CD4-positive, alpha-beta T cell (primary cell): ENCODE measurements at regions of chr14 and their contacts with region 1.

Region 1: GRCh38 chr14:95993768-95994592 is 45.2 kb upstream of the C14orf132 start:
- DNase-seq: peak in 6 of 14 experiments; percentile 4 to 60 (median 36)
- ATAC-seq: no peak
- H3K4me3 ChIP-seq: no peak overlapping the region
- H3K4me3 Mint-ChIP-seq: no peak overlapping the region
- H3K27ac ChIP-seq: no peak overlapping the region
- H3K27ac Mint-ChIP-seq: no peak overlapping the region
- H3K4me1 ChIP-seq: no peaks in the 10 kb centered on the region
- H3K4me1 Mint-ChIP-seq: no peaks in the 10 kb centered on the region
- H3K27me3 ChIP-seq: peaks cover 6 to 23% of the 10 kb centered on the region in 2 experiments
- H3K27me3 Mint-ChIP-seq: peaks cover 66% of the 10 kb centered on the region
- CTCF ChIP-seq: peak; percentile 89

Region 2: GRCh38 chr14:95425369-95426115 is 568.4 kb before region 1 on chr14:
- CTCF ChIA-PET with region 1: no interaction called
- POLR2A ChIA-PET with region 1: no interaction called
- intact Hi-C with region 1: loop called in 1 of 2 experiments (anchors 5 kb)
- DNase-seq: no peak
- ATAC-seq: no peak
- H3K4me3 ChIP-seq: no peak overlapping the region
- H3K4me3 Mint-ChIP-seq: no peak overlapping the region
- H3K27ac ChIP-seq: no peak overlapping the region
- H3K27ac Mint-ChIP-seq: no peak overlapping the region
- H3K4me1 ChIP-seq: peaks cover 2% of the 10 kb centered on the region
- H3K4me1 Mint-ChIP-seq: no peaks in the 10 kb centered on the region
- H3K27me3 ChIP-seq: no peaks in the 10 kb centered on the region
- H3K27me3 Mint-ChIP-seq: no peaks in the 10 kb centered on the region
- CTCF ChIP-seq: no peak

Region 3: GRCh38 chr14:95483309-95484165 is 510.4 kb before region 1 on chr14:
- CTCF ChIA-PET with region 1: no interaction called
- POLR2A ChIA-PET with region 1: no interaction called
- intact Hi-C with region 1: no loop called
- DNase-seq: no peak
- ATAC-seq: no peak
- H3K4me3 ChIP-seq: no peak overlapping the region
- H3K4me3 Mint-ChIP-seq: no peak overlapping the region
- H3K27ac ChIP-seq: peak overlapping the region in 1 of 2 donors; percentile 21
- H3K27ac Mint-ChIP-seq: peak overlapping the region; percentile 66
- H3K4me1 ChIP-seq: peaks cover 52% of the 10 kb centered on the region
- H3K4me1 Mint-ChIP-seq: peaks cover 68% of the 10 kb centered on the region
- H3K27me3 ChIP-seq: no peaks in the 10 kb centered on the region
- H3K27me3 Mint-ChIP-seq: no peaks in the 10 kb centered on the region
- CTCF ChIP-seq: no peak

Region 4: DNA sequence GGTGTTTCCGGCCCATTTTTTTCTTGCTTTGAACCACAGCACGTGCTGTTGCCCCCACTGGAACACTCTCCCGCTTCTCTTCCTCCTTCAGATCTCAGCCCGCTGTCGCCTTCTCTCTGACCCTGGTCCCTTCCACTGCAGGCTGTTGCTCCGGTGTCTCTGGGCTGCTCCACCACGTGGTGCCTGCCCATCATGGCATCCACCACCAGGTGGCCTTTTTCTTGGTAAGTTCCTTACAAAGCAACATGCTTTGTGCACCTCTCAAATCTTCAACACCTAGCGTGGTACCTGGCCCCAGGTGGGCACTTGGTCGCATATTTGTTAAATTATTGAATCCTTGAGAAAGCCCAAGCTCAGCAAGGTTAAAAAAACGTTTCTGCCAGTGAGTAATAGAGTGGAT is 98.3 kb before region 1 on chr14:
- CTCF ChIA-PET with region 1: no interaction called
- POLR2A ChIA-PET with region 1: no interaction called
- intact Hi-C with region 1: loop called (anchors 1 to 5 kb)
- DNase-seq: peak in 5 of 14 experiments; percentile 6 to 31 (median 7)
- ATAC-seq: no peak
- H3K4me3 ChIP-seq: no peak overlapping the region
- H3K4me3 Mint-ChIP-seq: no peak overlapping the region
- H3K27ac ChIP-seq: no peak overlapping the region
- H3K27ac Mint-ChIP-seq: no peak overlapping the region
- H3K4me1 ChIP-seq: no peaks in the 10 kb centered on the region
- H3K4me1 Mint-ChIP-seq: no peaks in the 10 kb centered on the region
- H3K27me3 ChIP-seq: peaks cover 0 to 4% of the 10 kb centered on the region in 2 experiments
- H3K27me3 Mint-ChIP-seq: peaks cover 52% of the 10 kb centered on the region
- CTCF ChIP-seq: peak; percentile 21

Region 5: GRCh38 chr14:96086041-96086440 is 92.1 kb after region 1 on chr14:
- CTCF ChIA-PET with region 1: no interaction called
- POLR2A ChIA-PET with region 1: no interaction called
- intact Hi-C with region 1: no loop called
- DNase-seq: no peak
- ATAC-seq: no peak
- H3K4me3 ChIP-seq: no peak overlapping the region
- H3K4me3 Mint-ChIP-seq: no peak overlapping the region
- H3K27ac ChIP-seq: no peak overlapping the region
- H3K27ac Mint-ChIP-seq: no peak overlapping the region
- H3K4me1 ChIP-seq: no peaks in the 10 kb centered on the region
- H3K4me1 Mint-ChIP-seq: no peaks in the 10 kb centered on the region
- H3K27me3 ChIP-seq: peaks cover 0 to 3% of the 10 kb centered on the region in 2 experiments
- H3K27me3 Mint-ChIP-seq: no peaks in the 10 kb centered on the region
- CTCF ChIP-seq: no peak

Region 6: DNA sequence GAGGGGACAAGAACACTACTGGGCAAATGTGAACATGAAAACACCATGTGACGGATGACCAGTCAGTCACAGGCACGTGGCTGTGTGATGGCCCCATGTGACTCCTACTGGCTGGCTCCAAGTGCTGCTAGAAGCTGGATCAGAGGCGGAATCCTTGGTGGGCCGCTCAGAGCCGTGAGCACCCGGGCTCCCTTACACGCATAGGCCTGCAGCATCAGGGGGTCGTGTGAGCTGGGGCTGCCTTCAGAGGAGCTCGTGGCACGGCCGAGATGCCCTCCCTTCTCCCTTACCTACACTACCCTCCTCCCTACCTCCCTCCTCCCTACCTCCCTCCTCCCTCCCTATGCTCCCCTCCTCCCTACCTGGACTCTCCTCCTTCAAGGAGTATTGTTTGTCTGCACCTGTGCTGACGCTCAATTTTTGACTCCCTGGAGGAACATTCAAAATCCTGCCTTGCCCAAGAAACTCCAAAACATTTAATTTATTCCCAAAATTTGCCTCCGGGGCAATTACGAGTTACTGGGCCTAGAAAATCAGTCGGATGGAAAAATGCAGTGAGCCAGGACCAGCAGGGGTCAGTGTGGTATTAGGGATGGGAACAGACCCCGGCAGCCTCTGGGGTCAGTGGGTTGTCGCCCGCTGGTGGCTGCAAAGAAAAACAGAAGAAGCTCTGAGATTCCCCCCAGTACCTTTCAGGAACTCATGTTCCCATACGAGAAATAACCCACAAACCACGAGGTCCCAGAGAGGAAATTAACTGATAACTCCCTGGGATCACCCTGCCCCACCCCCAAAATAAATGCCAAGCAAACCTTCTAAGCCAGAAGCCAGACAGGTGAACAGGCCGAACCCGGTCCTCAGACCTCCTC is 106.4 kb after region 1 on chr14:
- CTCF ChIA-PET with region 1: no interaction called
- POLR2A ChIA-PET with region 1: no interaction called
- intact Hi-C with region 1: loop called in 1 of 2 experiments (anchors 2 kb)
- DNase-seq: peak; percentile 56 to 86 (median 68)
- ATAC-seq: peak; percentile 75
- H3K4me3 ChIP-seq: no peak overlapping the region
- H3K4me3 Mint-ChIP-seq: no peak overlapping the region
- H3K27ac ChIP-seq: no peak overlapping the region
- H3K27ac Mint-ChIP-seq: no peak overlapping the region
- H3K4me1 ChIP-seq: peaks cover 3% of the 10 kb centered on the region
- H3K4me1 Mint-ChIP-seq: peaks cover 7% of the 10 kb centered on the region
- H3K27me3 ChIP-seq: peaks cover 0 to 4% of the 10 kb centered on the region in 2 experiments
- H3K27me3 Mint-ChIP-seq: no peaks in the 10 kb centered on the region
- CTCF ChIP-seq: peak; percentile 85